HepG2 (cell line): ENCODE measurements at regions of chr20 and their contacts with region 1.

Region 1: GRCh38 chr20:45963059-45964005 is 8.7 kb downstream of the ZNF335 start:
- DNase-seq: peak; percentile 82
- ATAC-seq: peak; percentile 74
- H3K4me3 ChIP-seq: no peak overlapping the region
- H3K27ac ChIP-seq: no peak overlapping the region
- H3K4me1 ChIP-seq: no peaks in the 10 kb centered on the region
- H3K27me3 ChIP-seq: no peaks in the 10 kb centered on the region
- CTCF ChIP-seq: peak; percentile 93
- EP300 ChIP-seq: no peak
- POLR2A ChIP-seq: no peak
- RAD21 ChIP-seq: peak; percentile 89

Region 2: GRCh38 chr20:45798935-45799642 is 164.2 kb before region 1 on chr20:
- CTCF ChIA-PET with region 1: interaction called, 14 read pairs
- POLR2A ChIA-PET with region 1: no interaction called
- in situ Hi-C with region 1: no loop called
- intact Hi-C with region 1: loop called (anchors 1 kb)
- DNase-seq: peak; percentile 61
- ATAC-seq: peak; percentile 97
- H3K4me3 ChIP-seq: no peak overlapping the region
- H3K27ac ChIP-seq: no peak overlapping the region
- H3K4me1 ChIP-seq: no peaks in the 10 kb centered on the region
- H3K27me3 ChIP-seq: no peaks in the 10 kb centered on the region
- CTCF ChIP-seq: peak; percentile 94
- EP300 ChIP-seq: no peak
- POLR2A ChIP-seq: no peak; a peak in 1 of 4 replicates
- RAD21 ChIP-seq: peak; percentile 71

Region 3: GRCh38 chr20:45823949-45824835 is 139.1 kb before region 1 on chr20:
- CTCF ChIA-PET with region 1: interaction called, 15 read pairs
- POLR2A ChIA-PET with region 1: interaction called, 3 read pairs
- in situ Hi-C with region 1: no loop called
- intact Hi-C with region 1: loop called (anchors 2 kb)
- DNase-seq: peak; percentile 51
- ATAC-seq: peak; percentile 71
- H3K4me3 ChIP-seq: peak overlapping the region in 1 of 3 experiments; percentile 28; a peak in 1 of 6 replicates
- H3K27ac ChIP-seq: no peak overlapping the region
- H3K4me1 ChIP-seq: peaks cover 61% of the 10 kb centered on the region
- H3K27me3 ChIP-seq: no peaks in the 10 kb centered on the region
- CTCF ChIP-seq: peak; percentile 98
- EP300 ChIP-seq: no peak
- POLR2A ChIP-seq: no peak
- RAD21 ChIP-seq: peak; percentile 94